ENCODE measurements at regions of chr3 and their contacts with region 1.

Region 1: GRCh38 chr3:138915503-138916498 is 31.1 kb downstream of the FOXL2 start:
- DNase-seq: peak; percentile 97
- ATAC-seq: peak; percentile 92
- H3K4me3 Mint-ChIP-seq: peak overlapping the region; percentile 66
- H3K27ac Mint-ChIP-seq: 0 out of 2 replicates have a peak overlapping the region, but pooled peaks have one; percentile 65
- H3K4me1 Mint-ChIP-seq: peaks cover 3% of the 10 kb centered on the region
- H3K27me3 Mint-ChIP-seq: peaks cover 10% of the 10 kb centered on the region
- CTCF ChIP-seq: peak; percentile 93

Region 2: DNA sequence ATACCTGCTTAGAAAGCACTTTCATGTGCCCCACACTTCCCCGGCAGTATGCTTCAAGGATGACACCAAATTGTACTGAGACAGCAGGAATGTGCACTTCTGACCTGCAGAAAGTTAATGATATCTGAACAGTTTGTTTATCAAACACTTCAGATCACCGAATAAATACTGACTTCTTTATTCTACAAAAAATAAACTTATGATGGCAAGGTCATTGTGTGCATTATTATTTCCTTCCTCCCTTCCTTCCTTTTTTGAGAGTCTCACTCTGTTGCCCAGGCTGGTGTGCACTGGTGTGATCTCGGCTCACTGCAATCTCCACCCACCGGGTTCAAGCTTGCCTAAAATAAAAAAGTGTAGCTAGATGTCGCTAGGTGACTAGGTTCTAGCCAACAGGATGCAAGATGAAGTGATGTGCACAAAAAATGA is 226.9 kb before region 1 on chr3:
- CTCF ChIA-PET with region 1: interaction called, 13 read pairs
- POLR2A ChIA-PET with region 1: no interaction called
- DNase-seq: no peak
- ATAC-seq: no peak
- H3K4me3 Mint-ChIP-seq: no peak overlapping the region
- H3K27ac Mint-ChIP-seq: no peak overlapping the region
- H3K4me1 Mint-ChIP-seq: no peaks in the 10 kb centered on the region
- H3K27me3 Mint-ChIP-seq: no peaks in the 10 kb centered on the region
- CTCF ChIP-seq: no peak

Region 3: GRCh38 chr3:138740072-138740471 is 175.7 kb before region 1 on chr3:
- CTCF ChIA-PET with region 1: interaction called, 14 read pairs
- POLR2A ChIA-PET with region 1: no interaction called
- DNase-seq: no peak
- ATAC-seq: no peak
- H3K4me3 Mint-ChIP-seq: no peak overlapping the region
- H3K27ac Mint-ChIP-seq: no peak overlapping the region
- H3K4me1 Mint-ChIP-seq: no peaks in the 10 kb centered on the region
- H3K27me3 Mint-ChIP-seq: no peaks in the 10 kb centered on the region
- CTCF ChIP-seq: no peak

Region 4: GRCh38 chr3:138806376-138807080 is 109.3 kb before region 1 on chr3:
- CTCF ChIA-PET with region 1: interaction called, 12 read pairs
- POLR2A ChIA-PET with region 1: no interaction called
- DNase-seq: no peak
- ATAC-seq: no peak
- H3K4me3 Mint-ChIP-seq: no peak overlapping the region
- H3K27ac Mint-ChIP-seq: peak overlapping the region; percentile 43; the same call in 1 of the 2 replicates
- H3K4me1 Mint-ChIP-seq: peaks cover 6% of the 10 kb centered on the region; the same call in 1 of the 2 replicates
- H3K27me3 Mint-ChIP-seq: no peaks in the 10 kb centered on the region
- CTCF ChIP-seq: no peak

Region 5: GRCh38 chr3:138854204-138854603 is 61.6 kb before region 1 on chr3:
- CTCF ChIA-PET with region 1: interaction called, 25 read pairs
- POLR2A ChIA-PET with region 1: no interaction called
- DNase-seq: no peak
- ATAC-seq: no peak
- H3K4me3 Mint-ChIP-seq: no peak overlapping the region
- H3K27ac Mint-ChIP-seq: no peak overlapping the region
- H3K4me1 Mint-ChIP-seq: peaks cover 15% of the 10 kb centered on the region
- H3K27me3 Mint-ChIP-seq: no peaks in the 10 kb centered on the region; the same call in 1 of the 2 replicates
- CTCF ChIP-seq: no peak

Region 6: DNA sequence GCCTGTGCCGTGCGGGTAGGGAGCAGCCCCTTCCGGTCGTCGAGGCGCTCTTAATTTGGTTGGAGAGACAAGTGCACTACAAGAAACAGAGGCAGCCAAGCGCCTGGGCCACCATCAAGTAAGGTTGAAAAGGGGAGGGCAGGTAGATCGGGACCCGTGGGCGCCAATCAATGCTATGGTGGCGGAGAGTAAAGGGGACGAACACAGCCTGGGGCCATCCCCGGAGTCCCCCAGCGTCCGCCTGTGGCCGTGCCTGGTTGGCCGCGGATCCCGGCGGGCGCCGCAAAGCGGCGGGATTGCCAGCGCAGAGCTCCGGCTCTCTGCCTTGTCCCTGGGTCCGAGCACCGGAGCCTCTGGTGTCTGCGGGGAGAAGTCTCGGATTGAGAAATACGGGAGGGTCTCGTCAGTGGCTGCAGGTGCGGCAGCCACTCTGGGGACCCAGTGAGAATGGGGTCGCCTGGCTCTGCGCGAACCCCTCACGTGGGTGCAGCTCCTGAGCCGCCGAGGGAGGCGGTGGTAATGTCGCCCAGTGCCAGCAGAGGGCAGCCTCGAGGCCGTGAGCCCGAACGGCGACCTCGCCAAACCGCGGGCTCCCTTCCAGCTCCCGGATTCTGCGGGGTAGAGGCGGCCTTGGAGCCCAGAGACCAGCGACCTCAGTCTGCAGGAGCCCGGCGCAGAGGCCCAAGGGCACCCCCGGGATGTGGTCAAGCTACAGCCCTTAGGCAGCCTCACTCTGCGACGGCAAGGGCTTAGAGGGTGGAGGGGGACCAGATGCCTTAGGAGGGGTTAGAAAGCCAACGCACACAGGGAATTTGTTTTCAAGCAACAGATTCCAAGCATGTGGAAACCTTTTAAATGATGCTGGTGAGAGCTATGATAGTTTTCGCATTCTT is 20.3 kb after region 1 on chr3:
- CTCF ChIA-PET with region 1: interaction called, 138 read pairs
- POLR2A ChIA-PET with region 1: interaction called, 5 read pairs
- DNase-seq: peak; percentile 91
- ATAC-seq: peak; percentile 61
- H3K4me3 Mint-ChIP-seq: peak overlapping the region; percentile 77
- H3K27ac Mint-ChIP-seq: no peak overlapping the region
- H3K4me1 Mint-ChIP-seq: peaks cover 51% of the 10 kb centered on the region
- H3K27me3 Mint-ChIP-seq: peaks cover 72% of the 10 kb centered on the region
- CTCF ChIP-seq: peak; percentile 96

Measured in WTC11 (cell line).